ENCODE measurements at regions of chr9 and their contacts with region 1.

Region 1: GRCh38 chr9:126524353-126525070 is 89.2 kb upstream of the LMX1B start:
- H3K4me3 Mint-ChIP-seq: peak overlapping the region; percentile 57
- H3K27ac Mint-ChIP-seq: peak overlapping the region; percentile 80
- H3K4me1 Mint-ChIP-seq: peaks cover 71% of the 10 kb centered on the region
- H3K27me3 Mint-ChIP-seq: peaks cover 6% of the 10 kb centered on the region

Region 2: GRCh38 chr9:126357074-126357473 is 167.4 kb before region 1 on chr9:
- intact Hi-C with region 1: no loop called
- H3K4me3 Mint-ChIP-seq: no peak overlapping the region
- H3K27ac Mint-ChIP-seq: no peak overlapping the region
- H3K4me1 Mint-ChIP-seq: peaks cover 49% of the 10 kb centered on the region
- H3K27me3 Mint-ChIP-seq: no peaks in the 10 kb centered on the region

Region 3: DNA sequence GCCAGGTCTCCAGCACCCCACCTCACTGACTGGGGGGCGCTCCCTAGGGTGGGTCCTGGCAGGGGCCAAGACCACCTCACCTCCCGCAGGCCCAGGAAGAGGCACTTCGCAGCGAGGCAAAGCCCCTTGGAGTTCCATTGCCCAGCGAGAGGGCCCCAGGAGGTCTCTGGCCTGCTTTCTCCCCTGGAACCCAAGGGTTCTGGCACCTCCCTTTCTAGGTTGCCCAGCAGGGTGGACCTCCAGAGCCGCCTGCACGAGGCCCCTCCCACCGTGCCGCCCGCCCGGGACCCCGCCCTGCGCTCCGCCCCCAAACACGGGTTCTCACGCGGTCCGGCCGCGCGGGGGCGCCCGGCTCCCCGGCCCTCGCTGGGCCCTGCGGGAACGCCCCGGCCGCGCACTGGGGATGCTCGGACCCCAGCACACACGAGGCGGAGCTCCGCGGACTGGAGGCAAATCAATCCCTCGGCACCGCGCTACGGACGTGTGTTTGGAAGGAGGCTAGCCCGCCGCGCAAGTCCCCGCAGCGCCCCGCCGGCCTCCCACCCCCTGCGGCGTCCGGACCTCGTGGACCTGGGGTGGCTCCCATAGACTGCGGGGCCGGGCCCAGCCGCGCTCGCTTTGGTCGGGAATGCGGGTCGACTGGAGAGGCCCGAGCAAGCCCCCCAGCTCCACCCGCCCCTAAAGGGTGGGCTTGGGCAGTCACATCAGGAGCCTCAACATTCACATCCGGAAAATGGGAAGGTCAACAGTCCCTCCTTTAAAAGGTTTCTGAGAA is 10.3 kb before region 1 on chr9:
- intact Hi-C with region 1: loop called (anchors 1 kb)
- H3K4me3 Mint-ChIP-seq: peak overlapping the region; percentile 60
- H3K27ac Mint-ChIP-seq: peak overlapping the region; percentile 92
- H3K4me1 Mint-ChIP-seq: peaks cover 56% of the 10 kb centered on the region
- H3K27me3 Mint-ChIP-seq: no peaks in the 10 kb centered on the region

Region 4: DNA sequence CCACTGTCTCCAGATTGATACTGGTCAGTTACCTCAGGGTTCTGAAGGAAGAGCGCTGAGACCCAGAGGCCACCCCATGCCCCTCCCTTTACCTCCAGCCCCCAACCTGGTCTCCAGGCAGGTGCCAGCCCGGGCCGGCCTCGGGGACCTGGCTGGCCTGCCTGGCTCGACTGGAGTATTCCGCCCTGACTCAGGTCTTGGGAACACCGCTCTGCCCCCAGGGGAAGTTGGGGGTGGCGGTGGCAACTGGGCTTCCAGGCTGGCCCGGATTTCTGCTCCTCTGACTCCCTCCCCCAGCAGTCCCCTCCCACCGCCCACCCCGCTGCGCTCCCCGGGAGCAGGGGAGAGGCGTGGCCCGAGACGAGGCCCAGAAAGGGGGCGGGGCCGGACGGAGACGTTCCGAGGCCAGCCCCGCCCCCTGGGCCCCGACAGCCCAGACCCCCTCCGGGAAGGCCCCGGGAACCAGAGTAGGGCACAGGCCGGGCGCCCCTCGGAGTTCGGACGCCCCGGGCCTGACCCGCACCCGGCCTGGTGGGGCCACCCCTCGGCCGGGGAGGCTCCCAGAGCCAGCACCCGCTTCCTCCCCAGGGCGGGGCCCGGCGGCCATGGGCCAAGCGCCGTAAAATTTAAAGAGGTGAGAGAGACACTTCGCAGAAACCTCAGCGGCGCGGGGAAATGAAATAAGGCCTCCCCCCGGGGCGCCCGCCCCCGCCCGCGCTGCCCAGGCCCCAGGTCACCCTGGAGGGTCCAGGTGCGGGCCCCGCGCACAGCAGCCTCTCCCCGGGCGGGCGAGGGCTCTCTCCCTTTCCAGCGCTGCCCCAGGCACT is 198.0 kb after region 1 on chr9:
- intact Hi-C with region 1: no loop called
- H3K4me3 Mint-ChIP-seq: peak overlapping the region; percentile 84
- H3K27ac Mint-ChIP-seq: peak overlapping the region; percentile 91
- H3K4me1 Mint-ChIP-seq: peaks cover 59% of the 10 kb centered on the region
- H3K27me3 Mint-ChIP-seq: peaks cover 9% of the 10 kb centered on the region

Measured in dendritic cell treated with granulocyte-macrophage colony-stimulating factor and Interleukin-4, amounts not matched to agents 40 ng/mL and 50 ng/mL, for 4 days (primary cell).